H1 (cell line): ENCODE measurements at regions of chr5 and their contacts with region 1.

Region 1: GRCh38 chr5:140145818-140146522 is 20.2 kb downstream of the IGIP start:
- DNase-seq: peak in 1 of 2 experiments; percentile 83
- H3K4me3 ChIP-seq: peak overlapping the region; percentile 28 to 82 (median 72)
- H3K27ac ChIP-seq: no peak overlapping the region
- H3K4me1 ChIP-seq: peaks cover 0 to 9% (median 0%) of the 10 kb centered on the region in 4 experiments; a peak in 2 of 7 replicates
- H3K27me3 ChIP-seq: peaks cover 25 to 51% (median 37%) of the 10 kb centered on the region in 4 experiments
- CTCF ChIP-seq: peak; percentile 49 to 70 (median 54)
- EP300 ChIP-seq: peak in 1 of 2 experiments; percentile 73; a peak in 1 of 3 replicates
- POLR2A ChIP-seq: no peak
- RAD21 ChIP-seq: peak; percentile 16 to 52; a peak in 3 of 4 replicates

Region 2: GRCh38 chr5:140013536-140013935 is 132.4 kb before region 1 on chr5:
- CTCF ChIA-PET with region 1: no interaction called
- POLR2A ChIA-PET with region 1: no interaction called
- DNase-seq: no peak
- H3K4me3 ChIP-seq: no peak overlapping the region
- H3K27ac ChIP-seq: no peak overlapping the region
- H3K4me1 ChIP-seq: no peaks in the 10 kb centered on the region
- H3K27me3 ChIP-seq: peaks cover 0 to 2% (median under 1%) of the 10 kb centered on the region in 4 experiments; a peak in 2 of 7 replicates
- CTCF ChIP-seq: no peak
- EP300 ChIP-seq: no peak
- POLR2A ChIP-seq: no peak
- RAD21 ChIP-seq: no peak

Region 3: GRCh38 chr5:140073296-140073695 is 72.7 kb before region 1 on chr5:
- CTCF ChIA-PET with region 1: interaction called, 36 read pairs
- POLR2A ChIA-PET with region 1: no interaction called
- DNase-seq: no peak
- H3K4me3 ChIP-seq: no peak overlapping the region
- H3K27ac ChIP-seq: no peak overlapping the region
- H3K4me1 ChIP-seq: no peaks in the 10 kb centered on the region
- H3K27me3 ChIP-seq: no peaks in the 10 kb centered on the region
- CTCF ChIP-seq: peak in 2 of 3 experiments; percentile 7 to 22; a peak in 2 of 4 replicates
- EP300 ChIP-seq: no peak
- POLR2A ChIP-seq: no peak
- RAD21 ChIP-seq: peak in 1 of 2 experiments; percentile 32; a peak in 3 of 4 replicates

Region 4: GRCh38 chr5:140107312-140108083 is 38.5 kb before region 1 on chr5:
- CTCF ChIA-PET with region 1: interaction called, 91 read pairs
- POLR2A ChIA-PET with region 1: interaction called, 11 read pairs
- DNase-seq: peak in 1 of 2 experiments; percentile 91
- H3K4me3 ChIP-seq: peak overlapping the region; percentile 39 to 75 (median 64)
- H3K27ac ChIP-seq: no peak overlapping the region
- H3K4me1 ChIP-seq: peaks cover 0 to 19% (median 8%) of the 10 kb centered on the region in 4 experiments; a peak in 4 of 7 replicates
- H3K27me3 ChIP-seq: peaks cover 31 to 76% (median 52%) of the 10 kb centered on the region in 4 experiments
- CTCF ChIP-seq: no peak
- EP300 ChIP-seq: peak in 1 of 2 experiments; percentile 70; a peak in 1 of 3 replicates
- POLR2A ChIP-seq: peak in 1 of 2 experiments; percentile 36; a peak in 1 of 3 replicates
- RAD21 ChIP-seq: no peak

Region 5: DNA sequence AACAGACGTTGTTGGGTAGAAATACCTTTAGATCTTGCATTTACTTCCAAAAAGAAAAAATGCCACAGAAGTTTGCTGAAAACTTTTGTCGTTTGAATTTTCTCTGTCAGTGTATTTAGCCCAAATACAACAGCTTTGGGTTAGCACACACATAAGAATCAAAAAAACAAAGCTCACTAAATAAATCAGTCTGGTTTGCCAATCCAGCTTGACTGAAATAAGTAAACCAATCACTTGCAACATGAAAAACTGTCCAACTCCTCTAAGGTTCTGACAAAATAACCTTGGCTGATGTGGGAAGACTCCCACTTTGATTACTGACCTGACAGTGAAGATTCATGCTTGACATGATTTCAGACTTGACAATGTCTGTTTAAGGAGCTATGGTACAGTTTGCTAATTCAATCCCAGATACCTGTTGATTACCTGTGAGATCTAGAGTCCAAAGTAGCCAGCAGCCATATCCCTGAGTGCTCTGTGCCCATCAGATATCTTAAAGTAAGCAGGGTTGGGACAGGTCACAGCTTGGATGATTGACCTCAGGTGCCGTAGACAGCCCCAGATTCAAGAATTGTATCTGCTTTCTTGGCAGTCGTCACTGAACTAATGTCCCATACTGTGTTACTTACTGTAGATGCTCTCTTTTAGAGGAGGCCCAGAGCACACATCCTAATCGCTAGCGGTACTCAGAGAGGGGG is 19.5 kb before region 1 on chr5:
- CTCF ChIA-PET with region 1: interaction called, 105 read pairs
- POLR2A ChIA-PET with region 1: no interaction called
- DNase-seq: no peak
- H3K4me3 ChIP-seq: no peak overlapping the region
- H3K27ac ChIP-seq: no peak overlapping the region
- H3K4me1 ChIP-seq: peaks cover 0 to 5% (median 1%) of the 10 kb centered on the region in 4 experiments; a peak in 2 of 7 replicates
- H3K27me3 ChIP-seq: no peaks in the 10 kb centered on the region; a peak in 1 of 7 replicates
- CTCF ChIP-seq: no peak
- EP300 ChIP-seq: no peak
- POLR2A ChIP-seq: no peak
- RAD21 ChIP-seq: no peak

Region 6: DNA sequence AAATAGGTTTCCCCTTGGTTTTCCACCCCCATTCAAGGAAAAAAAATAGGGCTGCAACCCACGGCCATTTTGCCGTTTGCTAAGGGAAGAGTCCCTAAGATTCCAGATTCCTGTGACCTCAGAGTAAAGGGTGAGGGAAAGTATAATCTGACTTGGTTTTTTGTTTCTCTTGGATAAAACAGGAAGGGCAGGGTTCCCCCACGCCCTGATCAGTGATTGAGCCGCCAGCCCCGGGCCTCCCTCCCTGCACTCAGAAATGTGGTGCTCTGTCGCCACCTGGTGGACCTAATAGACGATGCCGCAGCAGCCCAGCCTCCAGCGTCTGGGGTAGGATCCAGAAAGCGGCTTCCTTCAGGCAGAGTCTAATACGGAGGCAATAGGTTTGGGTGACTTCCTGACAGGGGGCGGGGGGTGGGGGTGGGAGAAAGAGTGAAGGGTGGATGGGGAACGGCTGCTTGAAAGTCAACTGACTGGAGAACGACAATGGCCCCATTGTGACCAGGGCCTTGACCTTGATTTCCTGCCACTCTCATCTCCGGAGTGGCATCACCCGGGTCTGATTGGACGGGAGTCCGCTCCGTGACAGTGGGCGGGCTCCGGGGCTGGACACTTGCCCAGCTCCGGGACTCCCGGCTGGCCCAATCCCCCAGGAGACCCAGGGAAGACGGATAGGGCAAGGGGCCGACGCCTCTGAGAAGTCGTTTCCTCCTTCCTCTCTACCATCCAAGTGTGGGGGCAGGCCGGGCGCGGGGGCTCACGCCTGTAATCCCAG is 11.2 kb after region 1 on chr5:
- CTCF ChIA-PET with region 1: interaction called, 118 read pairs
- POLR2A ChIA-PET with region 1: interaction called, 19 read pairs
- DNase-seq: peak in 1 of 2 experiments; percentile 96
- H3K4me3 ChIP-seq: peak overlapping the region in 3 of 4 experiments; percentile 19 to 52 (median 26); a peak in 6 of 8 replicates
- H3K27ac ChIP-seq: no peak overlapping the region
- H3K4me1 ChIP-seq: peaks cover 6 to 19% (median 14%) of the 10 kb centered on the region in 4 experiments
- H3K27me3 ChIP-seq: peaks cover 0 to 8% (median 6%) of the 10 kb centered on the region in 4 experiments; a peak in 4 of 7 replicates
- CTCF ChIP-seq: peak; percentile 89 to 96 (median 89)
- EP300 ChIP-seq: no peak; a peak in 1 of 3 replicates
- POLR2A ChIP-seq: no peak
- RAD21 ChIP-seq: peak; percentile 96 to 98

Region 7: DNA sequence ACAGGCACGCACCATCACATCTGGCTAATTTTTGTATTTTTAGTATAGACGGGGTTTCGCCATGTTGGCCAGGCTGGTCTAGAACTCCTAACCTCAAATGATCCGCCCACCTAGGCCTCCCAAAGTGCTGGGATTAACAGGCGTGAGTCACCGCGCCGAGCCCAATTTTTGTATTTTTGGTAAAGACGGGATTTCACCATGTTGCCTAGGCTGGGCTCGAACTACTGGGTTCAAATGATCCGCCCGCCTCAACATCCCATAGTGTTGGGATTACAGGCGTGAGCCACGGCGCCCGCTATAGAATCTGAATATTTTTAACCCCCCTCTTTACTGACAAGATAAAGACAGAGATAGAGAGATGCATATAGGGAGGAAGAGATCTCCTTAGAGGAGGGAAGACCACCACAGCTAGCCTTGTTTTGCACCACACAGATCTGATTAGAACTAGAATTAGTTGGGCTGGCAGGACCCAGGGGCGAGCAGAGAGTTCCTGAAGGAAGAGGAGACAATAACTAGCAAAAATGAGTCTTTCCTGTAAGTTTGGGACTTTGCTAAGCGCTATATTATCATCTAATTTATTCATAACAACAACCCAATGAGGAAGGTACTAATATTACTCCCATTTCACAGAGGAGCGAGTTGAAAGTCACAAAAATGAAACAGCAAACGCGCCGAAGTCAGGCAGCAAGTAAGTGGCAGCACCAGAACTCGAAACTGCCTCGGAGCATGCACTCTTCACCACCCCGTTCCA is 254.2 kb after region 1 on chr5:
- CTCF ChIA-PET with region 1: no interaction called
- POLR2A ChIA-PET with region 1: no interaction called
- DNase-seq: peak in 1 of 2 experiments; percentile 46
- H3K4me3 ChIP-seq: peak overlapping the region; percentile 94 to 100 (median 97)
- H3K27ac ChIP-seq: peak overlapping the region; percentile 92; the same call in 1 of the 2 replicates
- H3K4me1 ChIP-seq: peaks cover 0 to 6% (median 5%) of the 10 kb centered on the region in 4 experiments; a peak in 5 of 7 replicates
- H3K27me3 ChIP-seq: no peaks in the 10 kb centered on the region
- CTCF ChIP-seq: no peak
- EP300 ChIP-seq: no peak
- POLR2A ChIP-seq: no peak
- RAD21 ChIP-seq: no peak